Activated B cell treated with CpG ODN at 0.5 μM for 24 hours (primary cell): ENCODE measurements at regions of chr12 and their contacts with region 1.

Region 1: DNA sequence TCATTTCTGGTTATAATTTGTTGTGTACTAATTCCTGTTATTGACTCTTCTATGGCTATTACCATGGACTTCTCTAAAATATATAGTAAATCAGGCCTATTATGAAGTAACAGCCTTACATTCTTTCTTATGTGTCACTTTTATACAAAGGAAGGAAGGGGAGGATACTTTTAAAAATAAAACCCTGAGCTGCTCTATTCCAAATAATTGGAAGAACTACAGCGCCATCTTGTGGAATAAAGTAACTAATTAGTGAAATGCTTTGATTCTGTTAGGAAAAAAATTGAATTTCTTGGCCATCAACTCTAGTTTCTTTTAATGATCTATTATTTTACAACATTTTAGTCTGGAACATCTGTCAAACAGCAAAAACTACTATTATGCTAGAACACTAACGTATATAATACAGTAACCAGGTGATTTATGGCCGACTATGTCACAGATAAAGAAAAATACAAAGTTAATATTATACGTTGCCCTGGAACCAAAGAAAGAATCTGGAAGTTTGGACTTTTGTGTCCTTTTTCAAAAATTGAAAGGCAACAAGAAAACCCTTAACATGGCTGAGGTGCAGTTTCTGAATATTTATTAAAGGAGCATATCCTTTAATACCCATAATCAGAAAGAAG is 55.0 kb upstream of the NELL2 start:
- DNase-seq: no peak
- ATAC-seq: no peak
- H3K4me3 Mint-ChIP-seq: no peak overlapping the region
- H3K27ac Mint-ChIP-seq: no peak overlapping the region
- H3K4me1 Mint-ChIP-seq: no peaks in the 10 kb centered on the region
- H3K27me3 Mint-ChIP-seq: peaks cover 2% of the 10 kb centered on the region
- CTCF ChIP-seq: no peak

Region 2: GRCh38 chr12:43957732-43958372 is 973.2 kb before region 1 on chr12:
- CTCF ChIA-PET with region 1: interaction called, 4 read pairs
- POLR2A ChIA-PET with region 1: no interaction called
- intact Hi-C with region 1: loop called (anchors 1 kb)
- DNase-seq: no peak
- ATAC-seq: no peak
- H3K4me3 Mint-ChIP-seq: no peak overlapping the region
- H3K27ac Mint-ChIP-seq: no peak overlapping the region
- H3K4me1 Mint-ChIP-seq: no peaks in the 10 kb centered on the region
- H3K27me3 Mint-ChIP-seq: no peaks in the 10 kb centered on the region
- CTCF ChIP-seq: no peak

Region 3: DNA sequence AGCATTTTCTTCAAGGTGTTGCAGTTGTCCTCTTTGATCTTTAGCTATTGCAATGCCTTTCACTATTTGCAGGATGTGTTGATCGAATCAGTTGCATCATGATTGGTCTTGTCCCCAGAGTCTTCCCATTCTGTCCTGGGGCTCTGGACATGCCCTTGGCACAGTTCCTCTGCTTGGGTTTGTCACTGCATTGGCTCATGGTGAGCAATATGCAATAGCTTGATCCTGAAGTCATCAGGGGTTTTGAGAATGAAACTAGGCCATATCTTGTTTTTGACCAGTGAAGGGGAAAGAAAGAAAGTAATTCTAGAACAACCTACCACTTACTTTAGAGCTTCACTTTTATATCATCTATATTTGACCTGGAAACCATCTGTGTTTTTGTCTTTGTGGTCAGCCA is 813.7 kb before region 1 on chr12:
- CTCF ChIA-PET with region 1: no interaction called
- POLR2A ChIA-PET with region 1: no interaction called
- intact Hi-C with region 1: no loop called
- DNase-seq: no peak
- ATAC-seq: no peak
- H3K4me3 Mint-ChIP-seq: no peak overlapping the region
- H3K27ac Mint-ChIP-seq: no peak overlapping the region
- H3K4me1 Mint-ChIP-seq: no peaks in the 10 kb centered on the region
- H3K27me3 Mint-ChIP-seq: no peaks in the 10 kb centered on the region
- CTCF ChIP-seq: no peak

Region 4: DNA sequence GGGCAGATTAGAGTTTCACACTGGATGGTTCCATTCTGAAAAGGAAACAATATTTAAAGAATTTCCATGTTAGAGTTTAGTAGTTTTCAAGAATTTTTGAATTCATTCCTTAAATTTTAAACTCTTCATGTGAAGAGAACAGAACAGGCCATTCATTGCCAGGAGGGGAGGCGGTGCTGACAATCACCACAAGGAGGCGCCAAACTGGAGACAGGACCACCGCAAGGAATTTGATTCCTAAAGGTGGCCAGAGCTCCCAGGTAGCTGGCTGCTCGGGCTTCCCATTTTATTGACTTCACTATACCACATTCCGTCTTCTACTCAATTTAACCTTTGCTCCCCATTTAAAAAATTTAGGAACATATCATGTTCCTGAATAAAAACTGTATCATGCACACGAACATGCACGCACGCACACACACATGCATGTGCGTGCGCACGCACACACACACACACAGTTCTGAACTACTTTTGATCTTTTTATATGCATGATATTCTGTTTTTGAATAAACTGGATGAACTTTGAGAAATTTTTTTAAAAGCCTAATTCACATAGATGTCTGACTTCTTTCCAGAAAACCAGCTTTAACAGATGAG is 156.2 kb before region 1 on chr12:
- CTCF ChIA-PET with region 1: interaction called, 15 read pairs
- POLR2A ChIA-PET with region 1: no interaction called
- intact Hi-C with region 1: loop called (anchors 1 kb)
- DNase-seq: no peak
- ATAC-seq: no peak
- H3K4me3 Mint-ChIP-seq: no peak overlapping the region
- H3K27ac Mint-ChIP-seq: no peak overlapping the region
- H3K4me1 Mint-ChIP-seq: no peaks in the 10 kb centered on the region
- H3K27me3 Mint-ChIP-seq: peaks cover 4% of the 10 kb centered on the region
- CTCF ChIP-seq: peak; percentile 78

Region 5: GRCh38 chr12:44812062-44812461 is 119.0 kb before region 1 on chr12:
- CTCF ChIA-PET with region 1: interaction called, 11 read pairs
- POLR2A ChIA-PET with region 1: no interaction called
- intact Hi-C with region 1: loop called (anchors 1 kb)
- DNase-seq: no peak
- ATAC-seq: no peak
- H3K4me3 Mint-ChIP-seq: no peak overlapping the region
- H3K27ac Mint-ChIP-seq: no peak overlapping the region
- H3K4me1 Mint-ChIP-seq: no peaks in the 10 kb centered on the region
- H3K27me3 Mint-ChIP-seq: no peaks in the 10 kb centered on the region
- CTCF ChIP-seq: no peak